PC-9 (cell line): ENCODE measurements at regions of chr11 and their contacts with region 1.

Region 1: GRCh38 chr11:70397983-70398833 is at the start of gene CTTN:
- DNase-seq: peak; percentile 84
- H3K4me3 ChIP-seq: peak within 1 kb of the TSS; percentile 71
- H3K27ac ChIP-seq: peak within 1 kb of the TSS; percentile 88
- H3K4me1 ChIP-seq: peaks cover 43% of the 10 kb centered on the region
- H3K27me3 ChIP-seq: no peaks in the 10 kb centered on the region
- CTCF ChIP-seq: no peak
- total RNA-seq, gene CTTN: 533 and 570 TPM in 2 replicates

Region 2: GRCh38 chr11:70411713-70412452 is 13.7 kb after region 1 on chr11:
- CTCF ChIA-PET with region 1: no interaction called
- POLR2A ChIA-PET with region 1: interaction called, 11 read pairs
- intact Hi-C with region 1: no loop called
- DNase-seq: no peak
- H3K4me3 ChIP-seq: no peak overlapping the region
- H3K27ac ChIP-seq: no peak overlapping the region
- H3K4me1 ChIP-seq: no peaks in the 10 kb centered on the region
- H3K27me3 ChIP-seq: no peaks in the 10 kb centered on the region
- CTCF ChIP-seq: no peak

Region 3: DNA sequence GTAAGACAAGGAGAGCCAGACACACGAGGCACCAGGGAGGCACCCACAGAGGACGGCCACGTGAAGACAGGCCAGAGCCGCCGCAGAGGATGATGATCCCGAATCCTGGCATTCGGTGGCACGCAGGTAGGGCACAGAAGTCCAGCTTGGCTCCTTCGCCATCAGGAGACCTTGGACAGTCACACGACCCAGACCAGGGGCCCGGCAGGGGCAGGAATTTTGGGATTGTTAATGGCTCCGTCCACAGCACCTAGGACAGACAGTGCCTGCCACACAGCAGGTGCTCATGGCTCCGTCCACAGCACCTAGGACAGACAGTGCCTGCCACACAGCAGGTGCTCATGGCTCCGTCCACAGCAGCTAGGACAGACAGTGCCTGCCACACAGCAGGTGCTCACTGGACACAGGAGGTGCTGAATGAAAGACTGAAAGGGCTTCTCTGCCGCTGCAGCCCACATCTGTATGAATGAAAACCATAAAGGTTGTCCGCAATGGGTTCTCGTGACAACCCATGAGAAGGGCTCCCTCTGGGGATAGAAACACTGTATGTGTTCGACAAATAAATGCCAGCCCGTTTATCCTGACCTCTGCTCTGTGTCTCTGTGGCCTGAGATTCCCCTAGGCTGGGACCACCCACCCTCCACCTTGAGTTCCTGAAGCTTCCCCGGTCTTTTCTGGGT is 341.7 kb after region 1 on chr11:
- CTCF ChIA-PET with region 1: no interaction called
- POLR2A ChIA-PET with region 1: no interaction called
- intact Hi-C with region 1: no loop called
- DNase-seq: no peak
- H3K4me3 ChIP-seq: no peak overlapping the region
- H3K27ac ChIP-seq: no peak overlapping the region
- H3K4me1 ChIP-seq: no peaks in the 10 kb centered on the region
- H3K27me3 ChIP-seq: no peaks in the 10 kb centered on the region
- CTCF ChIP-seq: no peak